ENCODE measurements at regions of chr2 and their contacts with region 1.

Region 1: DNA sequence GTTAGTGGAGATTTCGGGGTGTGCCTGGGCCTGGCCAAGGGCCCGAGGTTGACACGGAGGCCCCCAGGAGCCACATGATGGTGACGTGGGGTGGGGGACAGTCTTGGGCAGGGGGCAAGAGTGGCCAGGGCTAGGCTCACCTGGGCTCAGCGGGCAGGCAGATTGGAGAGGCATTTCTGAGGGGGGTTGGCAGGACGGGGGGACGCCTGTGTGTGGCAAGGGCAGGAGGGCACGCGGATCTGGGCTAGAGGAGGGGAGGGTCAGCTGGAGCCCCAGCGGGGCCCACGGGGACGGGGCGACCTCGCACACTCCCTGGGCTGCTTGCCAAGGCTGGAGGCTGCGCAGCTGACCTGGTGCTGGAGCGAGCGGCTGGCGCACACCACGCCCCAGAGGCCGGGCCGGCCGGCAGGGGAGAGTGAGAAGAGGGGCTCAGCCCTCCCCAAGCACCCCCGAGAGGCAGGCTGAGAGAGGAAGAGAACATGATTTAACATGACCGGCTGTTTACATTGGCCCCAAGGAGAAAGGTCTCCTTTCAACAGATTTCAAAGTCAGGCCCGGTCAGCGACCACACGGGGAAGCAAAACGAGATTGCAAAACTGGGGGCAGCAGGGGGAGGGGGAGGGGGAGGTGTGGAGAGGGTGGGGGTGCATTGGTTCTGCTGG is 38.0 kb upstream of the SNED1 start:
- DNase-seq: peak; percentile 88 to 96 (median 94)
- H3K4me3 ChIP-seq: no peak overlapping the region
- H3K27ac ChIP-seq: peak overlapping the region; percentile 53 to 83
- H3K4me1 ChIP-seq: peaks cover 35% of the 10 kb centered on the region
- H3K27me3 ChIP-seq: no peaks in the 10 kb centered on the region
- CTCF ChIP-seq: peak in 1 of 3 donors; percentile 8
- EP300 ChIP-seq: no peak
- POLR2A ChIP-seq: no peak

Region 2: GRCh38 chr2:239927424-239927981 is 1032.9 kb before region 1 on chr2:
- intact Hi-C with region 1: no loop called
- DNase-seq: peak in 2 of 5 donors; percentile 2 to 23
- H3K4me3 ChIP-seq: no peak overlapping the region
- H3K27ac ChIP-seq: no peak overlapping the region
- H3K4me1 ChIP-seq: no peaks in the 10 kb centered on the region
- H3K27me3 ChIP-seq: no peaks in the 10 kb centered on the region
- CTCF ChIP-seq: no peak
- EP300 ChIP-seq: no peak
- POLR2A ChIP-seq: no peak

Region 3: GRCh38 chr2:240913810-240914644 is 46.4 kb before region 1 on chr2:
- intact Hi-C with region 1: loop called in 1 of 4 experiments (anchors 5 kb)
- DNase-seq: peak; percentile 81 to 94 (median 91)
- H3K4me3 ChIP-seq: no peak overlapping the region
- H3K27ac ChIP-seq: peak overlapping the region in 1 of 2 donors; percentile 13
- H3K4me1 ChIP-seq: peaks cover 25% of the 10 kb centered on the region
- H3K27me3 ChIP-seq: no peaks in the 10 kb centered on the region
- CTCF ChIP-seq: peak; percentile 71 to 93 (median 89)
- EP300 ChIP-seq: no peak
- POLR2A ChIP-seq: no peak

Region 4: DNA sequence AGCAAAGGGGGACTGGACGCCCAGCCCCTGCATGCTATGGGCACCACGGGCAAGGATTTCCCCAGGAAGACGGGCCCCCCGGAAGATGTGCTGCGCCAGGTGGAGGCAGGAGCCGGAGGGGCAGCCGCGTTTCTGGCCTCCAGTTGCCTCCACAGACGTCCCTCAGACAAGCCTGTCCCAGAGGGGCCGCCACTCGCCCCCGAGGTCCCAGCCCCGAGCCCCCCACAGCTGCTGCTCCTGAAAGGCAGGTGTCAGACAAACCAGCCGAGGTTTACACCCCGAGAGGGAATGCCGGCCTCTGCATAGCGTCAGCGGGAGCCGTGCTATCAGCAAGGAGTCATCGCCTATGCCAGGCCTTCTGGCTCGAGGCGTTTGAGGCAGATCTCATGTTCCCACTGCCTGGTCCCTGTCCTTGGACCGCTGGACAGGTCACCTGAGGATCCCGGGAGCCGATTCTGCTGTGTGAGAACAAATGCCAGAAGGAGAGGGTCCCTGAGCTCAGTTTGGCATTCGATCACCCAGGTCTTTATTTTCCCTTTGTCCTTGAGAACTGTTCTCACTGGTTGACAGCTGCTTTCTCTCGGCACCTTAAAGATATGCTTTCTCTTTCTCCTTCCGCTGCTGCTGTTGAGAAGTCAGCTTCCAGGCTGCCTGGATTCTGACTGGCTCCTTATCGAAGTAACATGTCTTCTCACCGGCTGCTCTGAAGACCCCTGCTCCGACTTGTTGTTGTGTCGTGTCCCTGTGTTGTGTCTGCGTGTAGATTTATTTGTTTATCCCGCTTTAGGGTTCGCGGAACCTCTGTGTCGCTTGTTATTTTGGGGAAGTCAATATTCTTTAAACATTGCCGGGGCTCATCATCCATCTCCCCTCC is 33.7 kb before region 1 on chr2:
- intact Hi-C with region 1: loop called in 1 of 4 experiments (anchors 1 kb)
- DNase-seq: peak; percentile 50 to 69 (median 53)
- H3K4me3 ChIP-seq: no peak overlapping the region
- H3K27ac ChIP-seq: peak overlapping the region; percentile 6 to 72
- H3K4me1 ChIP-seq: peaks cover 7% of the 10 kb centered on the region
- H3K27me3 ChIP-seq: no peaks in the 10 kb centered on the region
- CTCF ChIP-seq: no peak
- EP300 ChIP-seq: no peak
- POLR2A ChIP-seq: no peak

Region 5: GRCh38 chr2:240998120-240998994 is 37.9 kb after region 1 on chr2 and contains the start of gene SNED1:
- intact Hi-C with region 1: loop called in 1 of 4 experiments (anchors 5 kb)
- DNase-seq: peak; percentile 88 to 94 (median 91)
- H3K4me3 ChIP-seq: peak within 1 kb of the TSS; percentile 53
- H3K27ac ChIP-seq: peak within 1 kb of the TSS; percentile 66 to 71
- H3K4me1 ChIP-seq: peaks cover 52% of the 10 kb centered on the region
- H3K27me3 ChIP-seq: no peaks in the 10 kb centered on the region
- CTCF ChIP-seq: peak in 1 of 3 donors; percentile 7
- EP300 ChIP-seq: no peak
- POLR2A ChIP-seq: peak; percentile 46
- total RNA-seq, gene SNED1: 32.7 to 69.5 (median 50.3) TPM

Region 6: DNA sequence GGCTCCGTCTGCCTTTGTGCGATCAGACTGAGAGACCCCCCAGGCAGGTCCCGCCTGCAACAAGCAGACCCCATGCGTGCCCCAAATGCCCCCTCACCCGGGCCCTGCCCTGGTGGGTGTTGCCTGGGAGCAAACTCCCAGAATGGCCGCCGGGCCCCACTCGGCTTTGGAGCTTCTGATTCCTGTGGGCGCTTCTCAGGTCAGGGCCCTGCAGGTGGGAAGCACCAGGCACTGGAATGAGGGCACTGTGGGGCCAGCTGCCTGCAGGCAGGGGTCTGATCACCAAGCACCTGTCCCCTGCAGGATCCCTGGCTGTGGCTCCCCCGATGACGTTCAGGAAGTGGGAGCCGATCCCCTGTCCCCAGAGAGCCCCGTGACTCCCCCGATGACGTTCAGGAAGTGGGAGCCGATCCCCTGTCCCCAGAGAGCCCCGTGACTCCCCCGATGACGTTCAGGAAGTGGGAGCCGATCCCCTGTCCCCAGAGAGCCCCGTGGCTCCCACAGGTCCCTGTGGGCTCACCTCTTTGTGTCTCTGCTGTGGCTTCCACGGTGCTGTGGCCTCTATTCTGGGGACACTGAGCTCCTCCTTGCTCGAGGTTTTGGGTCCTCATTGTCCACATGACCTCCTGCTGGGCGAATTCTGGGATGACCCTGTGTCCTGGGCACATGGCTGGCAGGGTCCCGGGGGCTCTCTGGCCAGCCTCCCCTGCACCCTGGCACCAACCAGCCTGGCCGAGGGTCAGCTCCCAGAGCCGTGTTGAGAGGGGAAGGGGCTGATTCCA is 853.2 kb after region 1 on chr2:
- intact Hi-C with region 1: loop called in 1 of 4 experiments (anchors 5 kb)
- DNase-seq: peak in 1 of 5 donors; percentile 33
- H3K4me3 ChIP-seq: no peak overlapping the region
- H3K27ac ChIP-seq: no peak overlapping the region
- H3K4me1 ChIP-seq: no peaks in the 10 kb centered on the region
- H3K27me3 ChIP-seq: no peaks in the 10 kb centered on the region
- CTCF ChIP-seq: no peak
- EP300 ChIP-seq: no peak
- POLR2A ChIP-seq: no peak

Measured in ovary (tissue), 10 donors.